CD4-positive, alpha-beta memory T cell (primary cell): ENCODE measurements at regions of chr5 and their contacts with region 1.

Region 1: DNA sequence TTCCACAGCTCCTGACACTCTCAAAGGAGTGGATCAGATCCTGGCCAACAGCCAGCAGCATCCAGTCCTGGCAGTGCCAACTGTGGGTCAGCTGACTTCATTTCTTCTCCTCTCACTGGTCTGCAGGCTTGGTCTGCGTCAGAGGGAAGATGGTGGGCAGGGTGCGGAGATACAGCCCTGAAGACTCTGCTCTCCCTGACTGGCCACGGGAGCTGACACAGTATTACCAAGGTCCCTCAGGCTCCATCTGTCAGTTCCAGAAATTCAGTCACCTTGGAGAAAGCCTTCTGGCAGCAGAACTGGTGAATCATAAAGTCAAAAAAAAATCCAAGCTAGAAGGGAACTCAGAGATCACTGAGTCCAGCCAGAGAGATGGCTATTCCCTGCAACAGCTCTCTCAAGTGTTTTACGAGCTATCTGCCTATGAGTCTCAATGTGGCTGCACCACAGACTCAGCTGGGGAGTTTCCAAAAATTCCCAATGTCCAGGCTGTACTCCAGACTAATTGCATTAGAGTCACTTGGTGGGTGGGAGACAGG is 28.0 kb downstream of the C1QTNF2 start:
- DNase-seq: no peak
- H3K4me3 ChIP-seq: no peak overlapping the region
- H3K4me3 Mint-ChIP-seq: no peak overlapping the region
- H3K27ac ChIP-seq: no peak overlapping the region
- H3K27ac Mint-ChIP-seq: no peak overlapping the region
- H3K4me1 ChIP-seq: no peaks in the 10 kb centered on the region
- H3K4me1 Mint-ChIP-seq: no peaks in the 10 kb centered on the region
- H3K27me3 ChIP-seq: no peaks in the 10 kb centered on the region
- H3K27me3 Mint-ChIP-seq: peaks cover 2 to 3% of the 10 kb centered on the region in 2 donors

Region 2: GRCh38 chr5:159444441-159445082 is 897.9 kb before region 1 on chr5:
- CTCF ChIA-PET with region 1: interaction called, 4 read pairs
- POLR2A ChIA-PET with region 1: no interaction called
- intact Hi-C with region 1: loop called (anchors 1 kb)
- DNase-seq: peak in 4 of 5 donors; percentile 26 to 49 (median 32)
- H3K4me3 ChIP-seq: no peak overlapping the region
- H3K4me3 Mint-ChIP-seq: no peak overlapping the region
- H3K27ac ChIP-seq: no peak overlapping the region
- H3K27ac Mint-ChIP-seq: peak overlapping the region in 1 of 7 donors; percentile 35
- H3K4me1 ChIP-seq: no peaks in the 10 kb centered on the region
- H3K4me1 Mint-ChIP-seq: peaks cover 0 to 6% (median 5%) of the 10 kb centered on the region in 4 donors
- H3K27me3 ChIP-seq: no peaks in the 10 kb centered on the region
- H3K27me3 Mint-ChIP-seq: no peaks in the 10 kb centered on the region

Region 3: GRCh38 chr5:160199410-160199911 is 143.0 kb before region 1 on chr5:
- CTCF ChIA-PET with region 1: interaction called, 8 read pairs
- POLR2A ChIA-PET with region 1: no interaction called
- intact Hi-C with region 1: loop called (anchors 1 kb)
- DNase-seq: peak; percentile 44 to 66 (median 62)
- H3K4me3 ChIP-seq: peak overlapping the region in 1 of 2 donors; percentile 23
- H3K4me3 Mint-ChIP-seq: peak overlapping the region; percentile 51 to 87 (median 80)
- H3K27ac ChIP-seq: no peak overlapping the region
- H3K27ac Mint-ChIP-seq: peak overlapping the region in 2 of 7 donors; percentile 46 to 81
- H3K4me1 ChIP-seq: peaks cover 14% of the 10 kb centered on the region
- H3K4me1 Mint-ChIP-seq: peaks cover 0 to 10% (median 3%) of the 10 kb centered on the region in 4 donors
- H3K27me3 ChIP-seq: no peaks in the 10 kb centered on the region
- H3K27me3 Mint-ChIP-seq: peaks cover 5 to 17% of the 10 kb centered on the region in 2 donors

Region 4: GRCh38 chr5:160278343-160278955 is 64.0 kb before region 1 on chr5:
- CTCF ChIA-PET with region 1: no interaction called
- POLR2A ChIA-PET with region 1: no interaction called
- intact Hi-C with region 1: no loop called
- DNase-seq: no peak
- H3K4me3 ChIP-seq: no peak overlapping the region
- H3K4me3 Mint-ChIP-seq: no peak overlapping the region
- H3K27ac ChIP-seq: no peak overlapping the region
- H3K27ac Mint-ChIP-seq: no peak overlapping the region
- H3K4me1 ChIP-seq: no peaks in the 10 kb centered on the region
- H3K4me1 Mint-ChIP-seq: no peaks in the 10 kb centered on the region
- H3K27me3 ChIP-seq: no peaks in the 10 kb centered on the region
- H3K27me3 Mint-ChIP-seq: peaks cover 1 to 2% of the 10 kb centered on the region in 2 donors